ENCODE measurements at regions of chr3 and their contacts with region 1.

Region 1: GRCh38 chr3:79329154-79329553 is 438.6 kb downstream of the ROBO1 start:
- DNase-seq: no peak

Region 2: DNA sequence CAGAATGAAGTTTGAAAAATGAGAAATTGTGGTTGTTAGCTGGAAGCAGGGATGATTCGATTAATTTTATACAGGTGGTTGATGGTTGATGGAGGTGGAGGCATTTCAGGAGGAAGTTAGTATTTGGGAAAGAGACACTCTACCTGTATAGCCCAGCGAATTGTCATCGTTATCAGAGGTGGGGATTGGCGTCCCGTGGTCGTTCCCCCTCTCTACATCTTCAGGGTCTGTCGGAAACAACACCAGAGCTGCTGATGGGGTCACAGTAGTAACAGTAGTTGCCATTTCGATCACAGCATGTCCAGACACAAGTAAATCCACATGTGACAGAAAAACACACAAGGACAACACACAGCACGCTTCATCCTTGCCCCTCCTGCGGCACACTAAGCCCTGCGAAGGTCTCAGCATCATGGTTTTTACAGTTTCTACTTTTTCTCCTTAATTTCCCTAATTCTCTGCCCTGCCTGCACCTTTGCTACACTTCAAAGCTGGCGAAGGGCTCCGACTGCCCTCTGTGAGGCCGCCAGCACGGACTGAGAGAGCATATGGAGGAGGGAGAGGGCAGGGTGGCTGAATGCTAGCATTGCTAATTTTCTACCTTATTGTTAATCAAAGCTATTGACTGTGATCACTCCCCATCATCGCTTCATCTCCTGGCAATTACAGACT is 203.7 kb before region 1 on chr3:
- intact Hi-C with region 1: no loop called
- DNase-seq: no peak

Region 3: GRCh38 chr3:79187426-79187825 is 141.7 kb before region 1 on chr3:
- intact Hi-C with region 1: no loop called
- DNase-seq: no peak

Region 4: DNA sequence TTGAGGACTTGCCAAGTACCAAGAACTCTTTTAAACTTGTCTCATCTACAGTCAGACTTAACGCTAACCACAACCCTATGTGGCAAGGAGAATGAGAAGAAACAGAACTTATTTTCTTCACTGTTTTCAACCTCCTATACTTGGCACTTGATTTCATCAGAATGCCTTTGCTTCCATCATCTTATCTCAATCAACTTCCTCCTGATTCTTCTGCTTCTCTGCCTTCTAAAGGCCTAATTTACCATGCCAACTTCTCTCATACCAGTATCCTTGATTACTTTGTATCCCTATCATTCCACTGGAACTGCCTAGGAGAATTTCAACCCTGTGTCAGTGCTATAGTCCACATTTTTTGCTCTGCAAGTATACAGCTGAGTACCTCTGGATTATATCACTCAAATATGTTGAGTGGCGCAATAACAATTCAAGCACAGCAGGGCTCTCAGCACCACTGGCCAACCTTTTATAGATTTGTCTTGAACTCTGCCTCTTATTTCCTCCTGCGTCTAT is 25.1 kb after region 1 on chr3:
- intact Hi-C with region 1: loop called (anchors 1 kb)
- DNase-seq: no peak

Region 5: GRCh38 chr3:79767194-79767904 is 438.2 kb after region 1 on chr3:
- intact Hi-C with region 1: no loop called
- DNase-seq: peak in 2 of 10 donors; percentile 8 to 73